CD8-positive, alpha-beta T cell (primary cell): ENCODE measurements at regions of chr2 and their contacts with region 1.

Region 1: GRCh38 chr2:110204780-110205385 is at the start of gene NPHP1:
- DNase-seq: peak; percentile 68 to 91 (median 81)
- ATAC-seq: peak; percentile 92
- H3K4me3 ChIP-seq: peak within 1 kb of the TSS; percentile 76 to 91
- H3K4me3 Mint-ChIP-seq: peak within 1 kb of the TSS; percentile 92
- H3K27ac ChIP-seq: peak within 1 kb of the TSS; percentile 64 to 72
- H3K27ac Mint-ChIP-seq: peak within 1 kb of the TSS; percentile 89
- H3K4me1 ChIP-seq: peaks cover 10% of the 10 kb centered on the region
- H3K4me1 Mint-ChIP-seq: peaks cover 22% of the 10 kb centered on the region
- H3K27me3 ChIP-seq: no peaks in the 10 kb centered on the region
- H3K27me3 Mint-ChIP-seq: no peaks in the 10 kb centered on the region
- CTCF ChIP-seq: no peak
- total RNA-seq, gene NPHP1: 0.11 to 0.33 TPM

Region 2: GRCh38 chr2:108448678-108449493 is 1756.0 kb before region 1 on chr2 and contains the start of gene GCC2:
- CTCF ChIA-PET with region 1: no interaction called
- POLR2A ChIA-PET with region 1: no interaction called
- intact Hi-C with region 1: loop called (anchors 5 to 10 kb)
- DNase-seq: peak; percentile 94 to 98 (median 97)
- ATAC-seq: peak; percentile 90
- H3K4me3 ChIP-seq: peak within 1 kb of the TSS; percentile 97
- H3K4me3 Mint-ChIP-seq: peak within 1 kb of the TSS; percentile 97
- H3K27ac ChIP-seq: peak within 1 kb of the TSS; percentile 98 to 99
- H3K27ac Mint-ChIP-seq: peak within 1 kb of the TSS; percentile 99
- H3K4me1 ChIP-seq: peaks cover 18% of the 10 kb centered on the region
- H3K4me1 Mint-ChIP-seq: peaks cover 41% of the 10 kb centered on the region
- H3K27me3 ChIP-seq: no peaks in the 10 kb centered on the region
- H3K27me3 Mint-ChIP-seq: no peaks in the 10 kb centered on the region
- CTCF ChIP-seq: no peak
- total RNA-seq, gene GCC2: 147 to 157 TPM

Region 3: DNA sequence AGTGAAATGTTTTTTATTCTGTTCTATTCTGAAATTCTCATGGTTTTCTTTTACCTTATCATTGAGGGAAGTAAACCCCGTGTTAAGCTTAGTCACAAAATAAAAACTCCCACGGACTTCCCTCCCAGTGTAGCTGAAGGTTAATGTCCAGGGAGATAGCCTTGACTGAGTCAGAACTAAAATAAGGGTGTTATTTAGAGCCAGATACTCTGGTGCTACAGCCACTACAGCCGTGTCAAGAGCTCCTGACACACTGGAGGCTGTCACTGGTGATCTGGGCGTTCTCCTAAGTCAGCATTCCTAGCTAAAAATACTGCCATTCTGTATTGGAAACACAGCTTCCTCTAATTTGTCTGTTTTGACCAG is 1567.6 kb before region 1 on chr2:
- CTCF ChIA-PET with region 1: no interaction called
- POLR2A ChIA-PET with region 1: no interaction called
- intact Hi-C with region 1: loop called in 1 of 2 experiments (anchors 10 kb)
- DNase-seq: peak in 1 of 9 experiments; percentile 34
- ATAC-seq: no peak
- H3K4me3 ChIP-seq: no peak overlapping the region
- H3K4me3 Mint-ChIP-seq: no peak overlapping the region
- H3K27ac ChIP-seq: no peak overlapping the region
- H3K27ac Mint-ChIP-seq: no peak overlapping the region
- H3K4me1 ChIP-seq: no peaks in the 10 kb centered on the region
- H3K4me1 Mint-ChIP-seq: peaks cover 25% of the 10 kb centered on the region
- H3K27me3 ChIP-seq: no peaks in the 10 kb centered on the region
- H3K27me3 Mint-ChIP-seq: no peaks in the 10 kb centered on the region
- CTCF ChIP-seq: no peak

Region 4: DNA sequence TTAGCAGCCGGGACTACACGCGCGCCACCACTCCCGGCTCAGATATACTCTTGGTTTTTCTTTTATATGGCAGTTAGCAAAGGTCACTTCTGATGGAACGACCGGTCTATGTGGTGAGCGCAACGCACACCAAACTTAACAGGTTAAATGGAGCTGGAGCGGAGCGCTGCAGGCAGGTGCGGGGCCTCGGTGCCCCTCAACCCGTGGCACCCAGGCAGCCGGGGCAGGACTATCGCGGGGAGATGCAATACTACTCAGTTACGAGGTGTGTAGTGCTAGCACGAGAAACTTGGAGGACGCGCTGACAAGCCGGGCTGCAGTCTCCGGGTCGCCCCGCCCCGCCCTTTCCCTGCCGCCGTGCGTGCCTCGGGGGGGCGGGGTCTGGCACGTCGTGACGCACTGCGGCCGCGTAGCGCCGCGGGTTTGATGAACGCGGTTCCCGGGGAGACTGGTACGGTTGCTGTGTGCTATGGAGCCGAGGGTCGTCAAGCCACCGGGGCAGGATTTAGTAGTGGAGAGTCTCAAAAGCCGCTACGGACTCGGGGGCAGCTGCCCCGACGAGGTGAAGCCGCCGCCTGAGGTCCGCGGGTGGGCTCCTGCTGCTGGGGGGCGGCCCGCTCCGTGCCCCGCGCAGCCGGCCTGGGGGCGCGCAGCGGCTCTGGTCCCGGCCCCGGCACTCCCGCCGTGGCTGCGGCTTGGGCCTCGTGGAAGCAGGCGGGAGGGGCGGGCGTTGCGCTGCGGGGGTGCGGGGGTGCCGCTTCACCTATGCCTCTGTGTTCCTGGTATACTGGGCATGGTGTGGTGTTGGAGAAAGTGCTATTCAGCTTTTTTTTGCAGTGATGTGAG is 1418.3 kb before region 1 on chr2 and contains the start of gene CCDC138:
- CTCF ChIA-PET with region 1: no interaction called
- POLR2A ChIA-PET with region 1: no interaction called
- intact Hi-C with region 1: loop called in 1 of 2 experiments (anchors 10 kb)
- DNase-seq: peak; percentile 85 to 95 (median 93)
- ATAC-seq: peak; percentile 97
- H3K4me3 ChIP-seq: peak within 1 kb of the TSS; percentile 76 to 90
- H3K4me3 Mint-ChIP-seq: peak within 1 kb of the TSS; percentile 99
- H3K27ac ChIP-seq: peak within 1 kb of the TSS; percentile 77 to 83
- H3K27ac Mint-ChIP-seq: peak within 1 kb of the TSS; percentile 97
- H3K4me1 ChIP-seq: peaks cover 10% of the 10 kb centered on the region
- H3K4me1 Mint-ChIP-seq: peaks cover 22% of the 10 kb centered on the region
- H3K27me3 ChIP-seq: no peaks in the 10 kb centered on the region
- H3K27me3 Mint-ChIP-seq: no peaks in the 10 kb centered on the region
- CTCF ChIP-seq: no peak
- total RNA-seq, gene CCDC138: 4.6 to 5.9 TPM

Region 5: GRCh38 chr2:110677530-110678456 is 472.9 kb after region 1 on chr2 and contains the start of gene BUB1:
- CTCF ChIA-PET with region 1: no interaction called
- POLR2A ChIA-PET with region 1: no interaction called
- intact Hi-C with region 1: loop called in 1 of 2 experiments (anchors 5 kb)
- DNase-seq: peak; percentile 87 to 98 (median 95)
- ATAC-seq: peak; percentile 95
- H3K4me3 ChIP-seq: peak within 1 kb of the TSS; percentile 65 to 91
- H3K4me3 Mint-ChIP-seq: peak within 1 kb of the TSS; percentile 96
- H3K27ac ChIP-seq: peak within 1 kb of the TSS; percentile 66 to 67
- H3K27ac Mint-ChIP-seq: peak within 1 kb of the TSS; percentile 93
- H3K4me1 ChIP-seq: peaks cover 13% of the 10 kb centered on the region
- H3K4me1 Mint-ChIP-seq: peaks cover 27% of the 10 kb centered on the region
- H3K27me3 ChIP-seq: peaks cover 0 to 2% of the 10 kb centered on the region in 2 experiments
- H3K27me3 Mint-ChIP-seq: no peaks in the 10 kb centered on the region
- CTCF ChIP-seq: no peak
- total RNA-seq, gene BUB1: 2.4 to 3.1 TPM

Region 6: DNA sequence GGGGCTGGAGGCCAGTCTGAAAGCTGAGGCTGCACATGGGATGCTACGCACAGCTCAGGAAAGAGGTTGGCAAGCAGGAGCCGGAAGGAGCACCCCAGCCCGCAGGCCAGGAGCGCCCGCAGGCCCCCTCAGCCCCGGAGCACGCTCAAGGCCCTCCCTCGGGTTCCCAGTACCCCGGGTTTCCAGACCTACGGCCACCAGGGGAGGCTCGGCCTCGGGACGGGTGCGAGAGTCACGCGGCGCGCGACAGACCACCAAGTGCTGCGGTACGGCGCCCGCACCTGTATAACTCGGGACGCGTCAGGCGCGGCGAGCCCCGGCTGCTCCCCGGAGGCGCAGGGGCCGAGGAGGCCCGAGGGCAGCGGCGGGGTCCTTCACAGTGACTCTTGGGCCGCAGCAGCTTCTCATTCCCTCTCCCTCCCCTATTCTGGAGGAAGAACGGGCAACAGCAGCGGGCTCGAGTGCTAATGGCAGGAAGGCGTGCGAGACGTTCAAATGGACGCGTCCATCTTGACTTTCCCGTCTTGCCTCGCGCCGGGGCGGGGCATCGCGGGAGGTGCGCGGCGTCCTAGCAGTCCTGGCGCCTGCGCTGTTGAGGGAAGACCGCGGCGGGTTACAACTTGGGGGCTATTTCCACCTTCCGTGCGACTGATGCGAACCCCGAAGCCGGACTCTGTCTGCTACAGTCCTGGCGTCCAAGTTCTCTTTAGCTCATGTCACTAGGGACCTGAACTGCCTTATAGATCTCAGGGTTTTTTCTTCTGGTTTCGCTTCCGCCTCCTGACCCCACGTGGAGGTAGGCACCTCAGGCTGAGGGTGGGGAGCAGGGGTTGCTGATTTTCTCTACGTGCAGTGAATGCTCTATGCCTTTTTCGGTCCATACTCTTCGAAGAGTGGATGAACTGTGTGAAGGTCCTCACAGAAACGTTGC is 1679.0 kb after region 1 on chr2 and contains the start of gene ANAPC1:
- CTCF ChIA-PET with region 1: no interaction called
- POLR2A ChIA-PET with region 1: no interaction called
- intact Hi-C with region 1: loop called in 1 of 2 experiments (anchors 10 kb)
- DNase-seq: peak; percentile 69 to 91 (median 86)
- ATAC-seq: peak; percentile 96
- H3K4me3 ChIP-seq: peak within 1 kb of the TSS; percentile 75 to 82
- H3K4me3 Mint-ChIP-seq: peak within 1 kb of the TSS; percentile 96
- H3K27ac ChIP-seq: peak within 1 kb of the TSS; percentile 76 to 81
- H3K27ac Mint-ChIP-seq: peak within 1 kb of the TSS; percentile 98
- H3K4me1 ChIP-seq: peaks cover 8% of the 10 kb centered on the region
- H3K4me1 Mint-ChIP-seq: peaks cover 14% of the 10 kb centered on the region
- H3K27me3 ChIP-seq: no peaks in the 10 kb centered on the region
- H3K27me3 Mint-ChIP-seq: no peaks in the 10 kb centered on the region
- CTCF ChIP-seq: no peak
- total RNA-seq, gene ANAPC1: 39.6 to 43.9 TPM